HCT116 (cell line): ENCODE measurements at regions of chr4 and their contacts with region 1.

Region 1: GRCh38 chr4:27206009-27206408 is 345.4 kb downstream of the STIM2 start:
- DNase-seq: no peak
- ATAC-seq: no peak
- H3K4me3 ChIP-seq: no peak overlapping the region
- H3K27ac ChIP-seq: no peak overlapping the region
- H3K4me1 ChIP-seq: no peaks in the 10 kb centered on the region
- H3K27me3 ChIP-seq: no peaks in the 10 kb centered on the region; the same call in 1 of the 2 replicates
- CTCF ChIP-seq: no peak
- POLR2A ChIP-seq: no peak
- RAD21 ChIP-seq: no peak

Region 2: GRCh38 chr4:27096142-27096824 is 109.7 kb before region 1 on chr4:
- CTCF ChIA-PET with region 1: no interaction called
- POLR2A ChIA-PET with region 1: no interaction called
- RAD21 ChIA-PET with region 1: no interaction called
- intact Hi-C with region 1: loop called (anchors 10 kb)
- DNase-seq: no peak
- ATAC-seq: no peak
- H3K4me3 ChIP-seq: no peak overlapping the region
- H3K27ac ChIP-seq: no peak overlapping the region
- H3K4me1 ChIP-seq: peaks cover 0 to 7% of the 10 kb centered on the region in 2 experiments; a peak in 1 of 4 replicates
- H3K27me3 ChIP-seq: peaks cover 14% of the 10 kb centered on the region; the same call in 1 of the 2 replicates
- CTCF ChIP-seq: peak in 1 of 3 experiments; percentile 28; a peak in 1 of 6 replicates
- POLR2A ChIP-seq: no peak
- RAD21 ChIP-seq: peak; percentile 54